MCF 10A (cell line): ENCODE measurements at regions of chr20 and their contacts with region 1.

Region 1: DNA sequence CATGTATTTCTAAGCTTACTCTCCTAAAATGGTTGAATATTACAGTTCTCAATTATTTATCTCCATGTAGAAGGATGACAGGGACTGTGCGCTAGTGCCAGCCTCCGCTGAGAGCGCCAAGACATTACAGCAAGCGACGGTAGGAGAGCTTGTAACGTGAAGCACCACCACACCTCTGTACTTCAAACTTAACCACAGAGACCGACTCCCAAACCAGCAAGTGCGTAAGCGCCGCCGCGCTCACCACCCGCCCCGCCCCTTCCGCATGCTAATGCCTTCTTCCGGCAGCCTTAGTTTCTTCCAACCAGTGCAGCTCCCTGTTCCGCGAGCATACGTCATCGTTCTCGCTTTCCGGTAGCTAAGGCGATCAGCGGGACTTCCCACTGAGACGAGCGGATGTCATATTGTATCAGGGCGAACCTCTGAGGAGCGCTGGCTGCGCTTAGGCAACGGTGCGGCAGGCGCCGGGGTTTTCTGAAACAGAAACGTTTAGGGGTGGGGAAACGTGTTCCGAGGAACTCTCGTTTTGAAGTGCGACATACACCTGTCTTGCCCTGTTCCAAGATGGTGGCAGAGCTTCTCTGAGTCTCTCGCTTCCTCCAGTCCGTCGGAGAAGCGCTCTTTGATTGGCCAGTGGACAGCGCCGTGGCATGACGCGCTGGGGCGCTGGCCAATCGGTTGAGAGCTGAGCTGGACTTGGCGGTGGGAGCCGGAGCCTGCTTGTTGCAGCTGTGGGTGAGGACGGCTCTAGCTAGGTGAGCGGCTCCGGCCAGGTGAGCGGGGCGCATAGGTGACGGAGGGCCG is at the start of gene SEC23B:
- DNase-seq: peak; percentile 98
- H3K4me3 Mint-ChIP-seq: peak within 1 kb of the TSS; percentile 100
- H3K27ac Mint-ChIP-seq: peak within 1 kb of the TSS; percentile 100
- H3K4me1 Mint-ChIP-seq: peaks cover 14% of the 10 kb centered on the region
- H3K27me3 Mint-ChIP-seq: no peaks in the 10 kb centered on the region
- CTCF ChIP-seq: no peak
- total RNA-seq, gene SEC23B: 139 TPM in 2 replicates

Region 2: GRCh38 chr20:18331694-18332093 is 175.7 kb before region 1 on chr20:
- CTCF ChIA-PET with region 1: no interaction called
- POLR2A ChIA-PET with region 1: no interaction called
- intact Hi-C with region 1: no loop called
- DNase-seq: no peak
- H3K4me3 Mint-ChIP-seq: no peak overlapping the region
- H3K27ac Mint-ChIP-seq: no peak overlapping the region
- H3K4me1 Mint-ChIP-seq: no peaks in the 10 kb centered on the region
- H3K27me3 Mint-ChIP-seq: no peaks in the 10 kb centered on the region
- CTCF ChIP-seq: no peak

Region 3: DNA sequence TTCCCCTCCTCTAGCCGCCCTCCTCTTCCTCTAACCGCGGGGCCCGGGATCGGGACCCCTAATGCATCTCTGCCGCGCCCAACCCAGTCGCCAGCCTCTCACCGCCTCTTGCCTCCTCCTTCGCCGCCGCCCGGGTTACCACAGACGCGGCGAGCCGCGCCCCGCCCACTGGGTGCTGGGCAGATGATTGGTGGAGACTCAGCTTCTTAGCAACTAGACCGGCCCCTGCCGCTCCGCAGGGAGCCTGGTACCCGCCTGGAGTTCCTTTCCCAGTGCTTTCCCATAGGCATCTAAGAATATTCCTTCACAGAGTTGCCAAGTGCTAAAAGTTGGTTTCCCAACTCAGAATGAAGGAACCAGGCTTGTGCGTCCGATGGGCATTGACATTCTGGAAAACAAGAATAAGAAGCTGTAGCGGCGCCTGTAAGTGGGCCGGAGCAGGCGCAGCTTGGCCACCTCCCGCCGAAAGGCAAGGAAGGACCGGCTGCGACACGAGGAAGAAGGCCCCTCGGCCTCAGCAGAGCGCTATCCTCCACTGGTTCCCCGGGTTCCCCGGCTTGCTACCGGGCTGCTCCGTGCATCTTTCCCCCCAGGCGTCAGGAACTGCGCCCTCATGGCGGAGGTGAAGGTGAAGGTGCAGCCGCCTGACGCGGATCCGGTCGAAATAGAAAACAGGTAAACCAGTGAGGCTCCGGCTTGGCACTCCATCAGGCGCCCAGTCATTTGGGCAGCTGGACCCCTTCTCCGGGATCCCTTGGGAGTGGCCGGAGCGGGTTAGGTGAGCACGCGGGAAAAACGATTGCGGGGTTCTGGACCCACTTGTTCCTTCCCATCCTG is 40.3 kb before region 1 on chr20 and contains the starts of genes DZANK1 and POLR3F:
- CTCF ChIA-PET with region 1: interaction called, 3 read pairs
- POLR2A ChIA-PET with region 1: interaction called, 108 read pairs
- intact Hi-C with region 1: loop called (anchors 2 kb)
- DNase-seq: peak; percentile 96
- H3K4me3 Mint-ChIP-seq: peak within 1 kb of the TSS; percentile 98
- H3K27ac Mint-ChIP-seq: peak within 1 kb of the TSS; percentile 99
- H3K4me1 Mint-ChIP-seq: no peaks in the 10 kb centered on the region
- H3K27me3 Mint-ChIP-seq: no peaks in the 10 kb centered on the region
- CTCF ChIP-seq: no peak
- total RNA-seq, gene DZANK1: 2.5 and 3.0 TPM in 2 replicates
- total RNA-seq, gene POLR3F: 11.2 and 15.1 TPM in 2 replicates

Region 4: GRCh38 chr20:18496740-18497592 is 10.5 kb before region 1 on chr20 and contains the start of gene RBBP9:
- CTCF ChIA-PET with region 1: interaction called, 37 read pairs
- POLR2A ChIA-PET with region 1: interaction called, 283 read pairs
- intact Hi-C with region 1: no loop called
- DNase-seq: peak; percentile 83
- H3K4me3 Mint-ChIP-seq: peak within 1 kb of the TSS; percentile 91
- H3K27ac Mint-ChIP-seq: peak within 1 kb of the TSS; percentile 87
- H3K4me1 Mint-ChIP-seq: no peaks in the 10 kb centered on the region
- H3K27me3 Mint-ChIP-seq: no peaks in the 10 kb centered on the region
- CTCF ChIP-seq: no peak
- total RNA-seq, gene RBBP9: 6.8 and 7.3 TPM in 2 replicates

Region 5: GRCh38 chr20:18566892-18567742 is 59.7 kb after region 1 on chr20 and contains the start of gene SMIM26:
- CTCF ChIA-PET with region 1: no interaction called
- POLR2A ChIA-PET with region 1: interaction called, 49 read pairs
- intact Hi-C with region 1: loop called (anchors 5 kb)
- DNase-seq: peak; percentile 94
- H3K4me3 Mint-ChIP-seq: peak within 1 kb of the TSS; percentile 100
- H3K27ac Mint-ChIP-seq: peak within 1 kb of the TSS; percentile 97
- H3K4me1 Mint-ChIP-seq: peaks cover 19% of the 10 kb centered on the region
- H3K27me3 Mint-ChIP-seq: no peaks in the 10 kb centered on the region
- CTCF ChIP-seq: no peak
- total RNA-seq, gene SMIM26: 106 and 127 TPM in 2 replicates

Region 6: DNA sequence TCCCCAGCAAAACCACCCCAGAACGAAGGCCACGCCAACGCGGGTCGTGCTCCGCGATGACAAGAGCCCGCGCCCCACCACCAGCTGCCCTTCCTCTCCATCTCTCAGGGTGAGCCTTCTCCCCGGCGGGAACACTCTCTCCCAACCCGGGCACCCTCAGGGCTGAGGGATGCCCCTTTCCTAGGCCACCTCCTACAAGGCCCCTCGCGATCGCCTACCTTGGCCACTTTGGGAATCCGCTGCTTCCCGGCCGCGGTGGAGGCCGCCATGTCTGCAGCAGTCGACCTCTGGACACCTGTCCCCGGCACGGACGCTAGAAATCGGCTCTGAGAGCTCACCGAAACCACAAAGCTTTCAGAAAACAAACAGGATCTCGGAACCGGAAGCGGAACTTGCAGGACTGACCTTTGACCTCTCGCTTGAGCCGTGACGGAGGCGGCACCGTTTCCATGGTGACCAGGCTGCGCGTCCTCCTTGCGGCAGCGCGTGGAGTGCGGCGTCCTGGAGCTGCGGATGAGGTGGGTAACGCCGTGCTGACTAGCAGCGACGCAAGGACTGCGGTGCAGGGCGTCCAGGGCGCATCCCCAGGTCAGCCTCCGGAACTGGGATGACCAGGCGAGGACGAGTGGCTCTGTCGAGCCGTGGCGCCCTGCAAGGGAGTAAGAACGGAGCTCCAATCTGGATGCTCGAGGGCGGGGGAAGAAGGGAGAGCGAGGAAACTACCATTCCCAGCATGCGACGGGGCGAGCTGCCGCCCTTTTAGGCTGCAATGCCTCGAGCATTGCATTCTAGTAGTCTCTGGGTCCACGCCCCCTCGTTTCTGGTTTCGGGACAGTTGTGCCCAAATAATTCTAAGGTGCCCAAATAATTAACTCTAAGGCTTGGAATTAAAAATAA is 1544.9 kb after region 1 on chr20 and contains the starts of genes CFAP61 and CRNKL1:
- CTCF ChIA-PET with region 1: no interaction called
- POLR2A ChIA-PET with region 1: interaction called, 10 read pairs
- intact Hi-C with region 1: no loop called
- DNase-seq: peak; percentile 96
- H3K4me3 Mint-ChIP-seq: peak within 1 kb of the TSS; percentile 97
- H3K27ac Mint-ChIP-seq: peak within 1 kb of the TSS; percentile 96
- H3K4me1 Mint-ChIP-seq: peaks cover 10% of the 10 kb centered on the region
- H3K27me3 Mint-ChIP-seq: no peaks in the 10 kb centered on the region
- CTCF ChIP-seq: no peak
- total RNA-seq, gene CFAP61: 1.4 and 1.5 TPM in 2 replicates
- total RNA-seq, gene CRNKL1: 19.4 and 20.1 TPM in 2 replicates